Calu3 (cell line): ENCODE measurements at regions of chr5 and their contacts with region 1.

Region 1: DNA sequence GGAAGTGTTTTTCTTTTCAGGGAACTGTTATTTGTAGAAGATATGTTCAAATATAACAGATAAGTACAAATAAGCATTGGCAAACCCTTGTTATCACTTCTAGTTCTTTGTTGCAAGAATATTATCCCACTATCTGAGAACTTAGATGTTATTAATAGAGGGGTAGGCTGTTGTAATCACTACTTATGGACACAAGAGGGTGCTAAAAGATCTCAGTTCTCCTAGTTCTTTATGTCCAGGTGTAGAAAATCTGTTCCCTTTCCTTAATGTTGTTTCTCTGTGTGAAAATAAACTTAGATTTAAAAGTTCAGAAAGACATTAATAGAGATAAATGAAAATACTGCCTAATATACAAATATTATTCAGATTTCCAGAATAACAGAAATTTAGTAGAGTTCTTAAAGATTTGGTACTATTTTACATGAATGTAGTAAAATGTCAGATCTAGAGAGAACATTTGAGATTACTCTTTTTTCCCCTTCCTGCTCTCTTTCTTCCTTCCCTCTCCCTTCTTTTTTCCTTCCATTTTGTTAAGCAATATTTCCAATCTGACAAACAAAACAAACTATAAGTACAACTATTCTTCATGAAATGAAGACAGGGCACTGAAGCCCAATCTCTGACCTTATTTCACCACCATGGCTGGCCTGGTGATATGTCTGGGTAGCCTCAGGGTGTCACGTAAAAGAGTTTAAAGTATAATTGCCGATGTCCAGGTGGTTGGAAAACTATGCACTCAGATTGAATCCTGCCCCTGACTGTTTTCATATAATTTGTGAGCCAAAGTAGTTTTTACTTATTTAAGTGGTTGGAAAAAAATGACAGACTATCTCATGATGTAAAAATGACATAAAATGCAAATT is 43.6 kb upstream of the C5orf46 start:
- DNase-seq: no peak
- H3K4me3 Mint-ChIP-seq: no peak overlapping the region
- H3K27ac Mint-ChIP-seq: no peak overlapping the region
- H3K4me1 Mint-ChIP-seq: peaks cover 8% of the 10 kb centered on the region
- H3K27me3 Mint-ChIP-seq: no peaks in the 10 kb centered on the region
- CTCF ChIP-seq: peak; percentile 61

Region 2: GRCh38 chr5:147930769-147931168 is 19.2 kb before region 1 on chr5:
- CTCF ChIA-PET with region 1: no interaction called
- intact Hi-C with region 1: no loop called
- DNase-seq: no peak
- H3K4me3 Mint-ChIP-seq: no peak overlapping the region
- H3K27ac Mint-ChIP-seq: no peak overlapping the region
- H3K4me1 Mint-ChIP-seq: no peaks in the 10 kb centered on the region
- H3K27me3 Mint-ChIP-seq: no peaks in the 10 kb centered on the region
- CTCF ChIP-seq: no peak

Region 3: DNA sequence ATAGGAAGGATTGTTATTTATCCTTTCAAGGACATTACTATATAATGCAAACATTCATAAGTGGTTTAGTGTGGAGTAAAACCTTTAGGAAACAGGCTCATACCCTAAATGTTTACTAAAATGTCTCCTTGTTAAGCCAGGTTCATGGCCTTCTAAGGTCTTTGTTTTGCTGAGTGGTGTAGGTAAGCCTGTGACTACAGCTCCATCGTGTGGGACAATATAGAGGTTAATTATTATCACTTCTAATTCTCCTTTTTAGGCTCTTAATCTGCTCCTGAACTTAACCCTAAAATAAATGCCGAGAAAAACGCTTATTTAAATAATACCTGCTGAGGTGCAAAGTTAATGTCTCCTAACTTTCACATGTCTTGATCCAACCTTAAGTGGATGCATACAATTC is 157.7 kb after region 1 on chr5:
- CTCF ChIA-PET with region 1: interaction called, 4 read pairs
- intact Hi-C with region 1: loop called (anchors 1 kb)
- DNase-seq: peak; percentile 20
- H3K4me3 Mint-ChIP-seq: no peak overlapping the region
- H3K27ac Mint-ChIP-seq: no peak overlapping the region
- H3K4me1 Mint-ChIP-seq: no peaks in the 10 kb centered on the region
- H3K27me3 Mint-ChIP-seq: no peaks in the 10 kb centered on the region
- CTCF ChIP-seq: no peak

Region 4: DNA sequence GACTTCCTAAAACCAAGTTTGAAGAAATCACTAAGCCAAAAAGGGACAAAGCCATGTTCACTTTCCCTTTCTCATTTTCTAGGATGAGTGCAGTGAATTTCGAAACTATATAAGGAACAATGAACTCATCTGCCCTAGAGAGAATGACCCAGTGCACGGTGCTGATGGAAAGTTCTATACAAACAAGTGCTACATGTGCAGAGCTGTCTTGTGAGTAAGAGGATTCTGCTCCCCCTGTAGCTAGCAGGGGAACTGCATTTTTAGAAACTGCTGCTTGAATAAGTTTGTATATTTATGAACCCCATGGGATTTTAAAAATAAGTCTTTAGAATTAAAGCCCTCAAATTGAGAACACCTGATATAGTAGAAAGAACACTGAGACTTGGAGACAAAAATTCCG is 175.7 kb after region 1 on chr5:
- CTCF ChIA-PET with region 1: interaction called, 3 read pairs
- intact Hi-C with region 1: loop called (anchors 1 kb)
- DNase-seq: no peak
- H3K4me3 Mint-ChIP-seq: no peak overlapping the region
- H3K27ac Mint-ChIP-seq: no peak overlapping the region
- H3K4me1 Mint-ChIP-seq: peaks cover 4% of the 10 kb centered on the region
- H3K27me3 Mint-ChIP-seq: no peaks in the 10 kb centered on the region
- CTCF ChIP-seq: peak; percentile 52

Region 5: DNA sequence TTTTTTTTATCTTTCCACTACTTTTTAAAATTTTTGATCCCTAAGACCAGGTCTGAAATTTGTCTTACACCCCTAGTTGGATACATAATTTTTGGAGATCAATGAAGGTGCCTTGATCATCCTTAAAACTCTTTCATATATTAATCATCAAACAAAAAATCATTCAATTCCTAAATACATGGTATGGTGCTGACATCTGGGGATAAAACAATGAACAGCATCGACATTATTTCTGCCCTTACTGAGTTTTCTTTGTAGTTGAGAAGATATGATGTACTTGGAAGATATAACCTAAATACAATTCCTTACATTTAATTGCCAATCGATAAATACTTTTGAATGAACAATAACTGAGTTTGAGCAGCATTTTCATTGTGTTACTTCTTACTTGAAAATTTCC is 403.7 kb after region 1 on chr5:
- CTCF ChIA-PET with region 1: no interaction called
- intact Hi-C with region 1: loop called (anchors 5 kb)
- DNase-seq: no peak
- H3K4me3 Mint-ChIP-seq: no peak overlapping the region
- H3K27ac Mint-ChIP-seq: no peak overlapping the region
- H3K4me1 Mint-ChIP-seq: no peaks in the 10 kb centered on the region
- H3K27me3 Mint-ChIP-seq: no peaks in the 10 kb centered on the region
- CTCF ChIP-seq: no peak

Region 6: DNA sequence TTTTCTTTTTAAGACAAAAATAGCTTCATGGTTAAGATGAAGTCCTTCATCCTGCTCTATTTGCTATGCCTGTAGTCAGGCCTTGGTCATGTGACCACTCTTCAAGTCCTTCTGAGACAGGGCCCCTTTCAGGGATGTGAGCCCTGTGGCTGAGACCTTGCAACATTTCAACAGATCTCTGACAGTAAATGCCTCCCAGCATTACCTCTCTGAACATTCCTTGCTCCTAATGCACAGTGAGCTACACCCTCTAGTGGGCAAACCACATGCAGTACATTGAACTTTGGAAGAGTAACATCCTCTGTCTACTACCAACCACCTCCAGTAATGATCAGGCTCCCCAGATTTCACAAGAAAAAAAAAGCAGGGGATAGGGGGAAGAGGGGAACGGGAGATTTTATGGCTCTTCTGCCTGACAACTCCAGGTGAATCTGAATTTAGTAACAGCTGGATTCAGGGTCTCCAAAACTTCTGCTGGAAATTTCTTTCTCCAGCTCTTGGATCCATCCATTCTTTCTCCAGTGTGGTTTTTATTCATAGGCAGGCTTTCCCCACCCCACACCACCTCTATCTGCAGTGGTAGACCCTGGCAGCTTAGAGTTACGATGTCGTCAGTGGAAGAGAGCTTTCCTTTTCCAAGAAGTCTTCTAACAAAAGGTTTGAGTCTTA is 424.9 kb after region 1 on chr5:
- CTCF ChIA-PET with region 1: no interaction called
- intact Hi-C with region 1: loop called (anchors 1 kb)
- DNase-seq: peak; percentile 64
- H3K4me3 Mint-ChIP-seq: no peak overlapping the region
- H3K27ac Mint-ChIP-seq: no peak overlapping the region
- H3K4me1 Mint-ChIP-seq: peaks cover 18% of the 10 kb centered on the region
- H3K27me3 Mint-ChIP-seq: no peaks in the 10 kb centered on the region
- CTCF ChIP-seq: peak; percentile 71

Region 7: DNA sequence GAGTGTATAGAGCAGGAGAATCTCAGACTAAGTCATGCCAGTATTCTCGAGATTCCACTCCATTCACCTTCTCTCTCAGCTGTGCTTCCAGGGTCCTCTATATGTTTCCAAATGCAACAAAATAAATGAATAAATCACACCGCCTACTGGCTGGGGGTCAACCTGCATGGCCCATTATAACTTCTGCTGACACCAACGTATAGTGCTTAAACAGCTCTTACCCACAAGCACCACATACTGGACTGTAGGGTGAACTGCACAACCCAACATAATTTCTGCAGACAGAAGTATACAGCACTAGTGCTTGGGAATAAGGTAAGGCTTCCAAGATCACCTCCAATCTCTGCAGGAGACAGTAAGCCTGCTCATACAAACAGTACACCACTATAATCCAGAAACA is 737.5 kb after region 1 on chr5:
- CTCF ChIA-PET with region 1: no interaction called
- intact Hi-C with region 1: loop called (anchors 5 kb)
- DNase-seq: peak; percentile 42
- H3K4me3 Mint-ChIP-seq: no peak overlapping the region
- H3K27ac Mint-ChIP-seq: no peak overlapping the region
- H3K4me1 Mint-ChIP-seq: peaks cover 12% of the 10 kb centered on the region
- H3K27me3 Mint-ChIP-seq: peaks cover 26% of the 10 kb centered on the region
- CTCF ChIP-seq: peak; percentile 73